ENCODE measurements at regions of chr6 and their contacts with region 1.

Region 1: GRCh38 chr6:106512048-106512967 is 117.0 kb downstream of the RTN4IP1 start:
- DNase-seq: peak in 1 of 2 donors; percentile 75
- H3K4me3 ChIP-seq: peak overlapping the region; percentile 71 to 92
- H3K27ac ChIP-seq: peak overlapping the region; percentile 67 to 71
- H3K4me1 ChIP-seq: peaks cover 3 to 17% of the 10 kb centered on the region in 2 donors
- H3K27me3 ChIP-seq: no peaks in the 10 kb centered on the region
- CTCF ChIP-seq: peak in 1 of 3 experiments; percentile 35

Region 2: DNA sequence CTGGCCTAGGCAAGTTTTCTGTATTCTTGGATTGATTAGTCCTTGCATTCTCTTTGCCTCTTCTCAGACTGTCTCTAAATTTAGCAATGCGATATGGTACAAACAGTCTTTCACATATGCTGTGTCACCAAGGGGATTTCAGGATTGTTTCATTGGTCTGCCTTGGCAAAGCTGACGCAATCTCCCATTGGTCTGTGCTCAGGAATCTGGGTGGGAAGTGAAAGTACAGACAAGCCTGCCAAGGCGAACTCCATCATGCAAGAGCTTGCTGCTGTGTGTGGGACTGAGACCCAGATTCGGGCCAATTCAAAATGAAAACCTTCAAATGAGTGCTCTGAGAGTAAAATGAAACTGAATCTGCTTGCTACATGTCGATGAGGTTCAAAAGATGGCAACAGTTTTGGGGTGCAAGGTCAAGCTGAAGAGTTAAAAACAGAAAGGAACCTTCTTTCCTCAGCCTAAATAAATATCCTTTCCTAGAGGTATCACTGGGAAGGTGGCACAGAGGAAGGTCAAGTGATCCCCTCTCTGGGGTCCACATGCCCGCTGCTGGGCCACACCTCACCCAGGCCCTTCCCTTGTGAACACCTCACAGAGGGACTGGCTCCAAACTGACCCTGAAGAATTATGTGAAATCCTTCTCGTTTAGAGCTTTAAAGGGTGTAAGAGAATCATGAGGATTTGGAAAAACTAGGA is 910.6 kb before region 1 on chr6:
- intact Hi-C with region 1: loop called (anchors 10 kb)
- DNase-seq: peak; percentile 46 to 94
- H3K4me3 ChIP-seq: peak overlapping the region; percentile 28 to 44
- H3K27ac ChIP-seq: peak overlapping the region; percentile 62 to 87
- H3K4me1 ChIP-seq: peaks cover 0 to 30% of the 10 kb centered on the region in 2 donors
- H3K27me3 ChIP-seq: no peaks in the 10 kb centered on the region
- CTCF ChIP-seq: no peak

Region 3: DNA sequence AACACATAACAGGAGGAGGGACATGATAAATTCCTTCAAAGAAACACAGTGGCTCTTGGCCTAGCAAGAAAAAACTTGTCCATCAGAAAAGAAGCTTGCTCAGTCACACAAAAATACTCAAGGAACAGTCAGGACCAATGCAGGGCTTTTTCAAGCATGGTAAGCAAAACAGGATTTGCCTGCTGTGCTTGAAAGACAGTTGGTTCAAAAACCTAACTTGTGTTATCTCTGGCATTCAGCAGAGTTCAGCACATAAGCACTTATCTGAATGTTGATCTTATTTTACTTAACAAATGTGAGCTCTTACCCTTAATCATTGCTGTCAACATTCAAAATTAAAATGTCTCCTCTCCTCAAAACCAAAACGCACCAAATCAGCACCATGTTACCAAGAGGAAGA is 225.1 kb before region 1 on chr6:
- intact Hi-C with region 1: no loop called
- DNase-seq: no peak
- H3K4me3 ChIP-seq: no peak overlapping the region
- H3K27ac ChIP-seq: no peak overlapping the region
- H3K4me1 ChIP-seq: no peaks in the 10 kb centered on the region
- H3K27me3 ChIP-seq: no peaks in the 10 kb centered on the region
- CTCF ChIP-seq: no peak

Region 4: GRCh38 chr6:106444777-106445507 is 67.4 kb before region 1 on chr6:
- intact Hi-C with region 1: loop called (anchors 5 kb)
- DNase-seq: no peak
- H3K4me3 ChIP-seq: no peak overlapping the region
- H3K27ac ChIP-seq: no peak overlapping the region
- H3K4me1 ChIP-seq: no peaks in the 10 kb centered on the region
- H3K27me3 ChIP-seq: no peaks in the 10 kb centered on the region
- CTCF ChIP-seq: peak; percentile 37 to 73 (median 65)

Region 5: DNA sequence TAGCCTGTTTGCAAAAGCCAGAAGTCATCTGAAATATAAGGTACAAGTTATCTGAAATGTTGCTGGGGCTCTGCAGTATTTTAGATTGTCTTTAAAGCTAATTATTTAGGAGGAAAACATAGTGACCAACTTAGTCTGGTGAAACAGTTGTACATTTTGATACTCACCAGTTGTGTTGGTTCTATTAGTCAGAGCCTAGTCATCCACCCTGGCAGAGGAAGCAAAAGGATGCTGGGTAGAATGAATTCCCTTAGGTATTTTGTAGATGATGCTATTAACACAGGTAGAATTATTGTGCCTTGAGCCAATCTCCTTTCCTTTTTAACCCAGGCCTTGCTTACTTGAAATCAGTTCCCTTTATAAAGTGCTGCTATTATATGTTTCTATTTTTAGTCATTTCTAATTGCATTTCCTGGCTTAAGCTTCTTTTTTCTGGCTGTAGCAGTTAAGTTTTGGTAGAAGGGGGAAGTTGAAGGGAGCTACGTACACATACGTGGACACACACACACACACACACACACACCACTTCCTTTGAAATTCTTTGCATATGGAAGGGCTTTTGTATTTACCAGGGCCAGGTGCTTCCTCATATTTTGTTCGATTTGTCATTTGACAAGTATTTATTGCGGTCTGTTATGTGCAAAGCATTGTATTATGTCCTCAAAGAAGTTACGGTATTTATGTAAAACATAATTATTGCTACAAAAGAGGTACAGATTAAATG is 34.5 kb after region 1 on chr6:
- intact Hi-C with region 1: loop called (anchors 2 kb)
- DNase-seq: peak in 1 of 2 donors; percentile 73
- H3K4me3 ChIP-seq: no peak overlapping the region
- H3K27ac ChIP-seq: peak overlapping the region; percentile 71 to 79
- H3K4me1 ChIP-seq: peaks cover 14 to 19% of the 10 kb centered on the region in 2 donors
- H3K27me3 ChIP-seq: no peaks in the 10 kb centered on the region
- CTCF ChIP-seq: no peak